Sciatic nerve (tissue), 2 donors: ENCODE measurements at regions of chr11 and their contacts with region 1.

Region 1: GRCh38 chr11:97525273-97525672 is 1135.5 kb downstream of the JRKL start:
- DNase-seq: no peak
- ATAC-seq: no peak

Region 2: GRCh38 chr11:97015327-97015726 is 509.9 kb before region 1 on chr11:
- intact Hi-C with region 1: no loop called
- DNase-seq: no peak
- ATAC-seq: no peak

Region 3: DNA sequence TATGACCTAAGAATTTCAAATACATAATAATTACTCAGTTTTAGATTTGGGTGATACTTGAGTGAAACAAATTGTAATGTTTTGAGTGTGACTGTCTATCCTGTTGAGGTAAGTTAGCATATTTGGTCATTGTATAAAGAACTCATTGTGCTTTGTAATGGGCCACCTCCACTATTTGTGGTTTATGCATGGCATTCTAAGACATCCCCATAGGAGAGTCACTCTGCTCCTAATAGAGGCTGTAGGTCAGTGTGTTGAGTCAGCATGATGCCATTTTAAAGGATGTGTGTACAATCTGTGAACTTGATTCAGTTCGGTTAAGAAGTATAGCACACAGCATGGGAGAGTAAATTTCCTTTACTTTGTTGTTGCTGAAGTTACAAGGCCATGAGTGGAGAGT is 23.1 kb before region 1 on chr11:
- intact Hi-C with region 1: loop called (anchors 1 kb)
- DNase-seq: no peak
- ATAC-seq: no peak

Region 4: GRCh38 chr11:98227276-98227675 is 702.0 kb after region 1 on chr11:
- intact Hi-C with region 1: no loop called
- DNase-seq: no peak
- ATAC-seq: no peak